ENCODE measurements at regions of chr18 and their contacts with region 1.

Region 1: DNA sequence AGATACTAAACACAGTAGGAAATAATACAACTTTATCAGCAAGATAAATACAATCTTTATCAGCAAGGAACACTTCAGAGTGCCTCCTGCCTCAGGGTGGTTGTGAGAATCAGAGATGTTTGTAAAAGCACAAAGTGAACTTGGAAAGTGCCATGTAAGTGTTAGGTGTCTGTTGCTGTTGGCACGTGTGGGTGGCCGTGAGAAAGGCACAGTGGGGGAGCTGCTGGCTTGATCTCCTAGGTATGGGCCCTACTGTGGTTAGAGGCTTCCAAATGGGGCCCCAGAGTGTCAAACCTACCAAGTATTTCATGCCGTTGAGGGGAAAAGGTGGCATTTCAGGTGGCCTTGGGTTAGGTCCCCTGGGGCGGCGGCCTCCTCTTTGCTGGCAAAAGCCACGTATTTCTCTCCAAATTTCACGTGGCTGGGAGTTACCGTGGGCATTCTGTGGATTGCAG is 72.0 kb downstream of the MAPK4 start:
- DNase-seq: no peak
- ATAC-seq: no peak
- H3K4me3 Mint-ChIP-seq: no peak overlapping the region
- H3K27ac Mint-ChIP-seq: no peak overlapping the region
- H3K4me1 Mint-ChIP-seq: no peaks in the 10 kb centered on the region
- H3K27me3 Mint-ChIP-seq: peaks cover 5% of the 10 kb centered on the region
- CTCF ChIP-seq: no peak

Region 2: DNA sequence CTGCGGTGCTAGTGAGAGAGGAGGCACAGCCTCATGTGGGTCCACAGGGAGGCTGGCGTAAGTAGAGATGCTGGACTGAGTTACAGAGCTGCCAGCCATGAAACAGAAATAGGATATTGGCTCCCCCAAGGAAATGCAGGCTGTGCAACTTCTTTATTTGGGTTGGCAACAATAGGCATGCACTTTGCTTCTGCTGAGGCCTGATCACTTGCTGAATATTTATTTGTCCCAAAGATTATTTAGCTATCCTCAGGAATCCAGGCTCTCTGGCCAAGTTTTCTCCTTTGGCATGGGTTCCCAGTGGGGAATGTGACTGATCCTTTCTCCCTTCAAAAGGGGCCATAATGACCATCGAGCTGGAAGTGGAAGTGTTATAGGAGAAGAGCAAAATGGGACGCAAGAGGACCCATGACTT is 12.0 kb before region 1 on chr18:
- CTCF ChIA-PET with region 1: no interaction called
- POLR2A ChIA-PET with region 1: no interaction called
- intact Hi-C with region 1: no loop called
- DNase-seq: no peak
- ATAC-seq: no peak
- H3K4me3 Mint-ChIP-seq: no peak overlapping the region
- H3K27ac Mint-ChIP-seq: no peak overlapping the region
- H3K4me1 Mint-ChIP-seq: no peaks in the 10 kb centered on the region
- H3K27me3 Mint-ChIP-seq: peaks cover 14% of the 10 kb centered on the region
- CTCF ChIP-seq: no peak

Region 3: GRCh38 chr18:50644810-50645209 is 13.0 kb after region 1 on chr18:
- CTCF ChIA-PET with region 1: no interaction called
- POLR2A ChIA-PET with region 1: no interaction called
- intact Hi-C with region 1: no loop called
- DNase-seq: no peak
- ATAC-seq: no peak
- H3K4me3 Mint-ChIP-seq: no peak overlapping the region
- H3K27ac Mint-ChIP-seq: no peak overlapping the region
- H3K4me1 Mint-ChIP-seq: no peaks in the 10 kb centered on the region
- H3K27me3 Mint-ChIP-seq: no peaks in the 10 kb centered on the region
- CTCF ChIP-seq: no peak

Region 4: DNA sequence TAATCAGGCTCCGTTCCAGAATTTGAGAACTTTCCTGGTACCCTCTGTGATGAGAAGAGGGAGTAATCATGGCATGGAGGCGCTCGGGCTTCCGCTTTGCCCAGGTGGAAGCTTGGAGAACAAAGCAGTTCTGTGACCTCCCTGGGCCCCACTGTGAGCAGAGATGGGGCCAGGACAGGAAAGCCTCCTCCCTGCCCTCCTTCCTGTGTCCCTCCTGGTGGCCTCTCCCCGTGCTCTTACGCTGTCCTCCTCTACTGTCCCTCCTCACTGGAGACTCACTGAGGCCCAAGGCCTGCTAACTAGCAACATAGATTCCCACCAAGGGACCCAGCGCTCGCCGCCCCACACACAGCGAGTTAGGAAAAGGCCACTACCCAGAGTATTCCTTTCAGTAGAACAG is 47.8 kb after region 1 on chr18:
- CTCF ChIA-PET with region 1: no interaction called
- POLR2A ChIA-PET with region 1: no interaction called
- intact Hi-C with region 1: loop called (anchors 5 kb)
- DNase-seq: no peak
- ATAC-seq: no peak
- H3K4me3 Mint-ChIP-seq: no peak overlapping the region
- H3K27ac Mint-ChIP-seq: no peak overlapping the region
- H3K4me1 Mint-ChIP-seq: no peaks in the 10 kb centered on the region
- H3K27me3 Mint-ChIP-seq: peaks cover 3% of the 10 kb centered on the region
- CTCF ChIP-seq: no peak

Measured in activated CD8-positive, alpha-beta T cell treated with anti-CD3 and anti-CD28 coated beads for 36 hours (primary cell).